ENCODE measurements at regions of chr16 and their contacts with region 1.

Region 1: GRCh38 chr16:17571499-17572093 is 100.8 kb upstream of the XYLT1 start:
- DNase-seq: no peak
- ATAC-seq: no peak
- H3K4me3 Mint-ChIP-seq: no peak overlapping the region
- H3K27ac Mint-ChIP-seq: no peak overlapping the region
- H3K4me1 Mint-ChIP-seq: no peaks in the 10 kb centered on the region
- H3K27me3 Mint-ChIP-seq: peaks cover 2% of the 10 kb centered on the region
- CTCF ChIP-seq: no peak

Region 2: GRCh38 chr16:17556276-17557052 is 15.1 kb before region 1 on chr16:
- CTCF ChIA-PET with region 1: interaction called, 13 read pairs
- POLR2A ChIA-PET with region 1: no interaction called
- intact Hi-C with region 1: no loop called
- DNase-seq: peak; percentile 6
- ATAC-seq: no peak
- H3K4me3 Mint-ChIP-seq: no peak overlapping the region
- H3K27ac Mint-ChIP-seq: no peak overlapping the region
- H3K4me1 Mint-ChIP-seq: no peaks in the 10 kb centered on the region
- H3K27me3 Mint-ChIP-seq: peaks cover 1% of the 10 kb centered on the region
- CTCF ChIP-seq: peak; percentile 64

Region 3: DNA sequence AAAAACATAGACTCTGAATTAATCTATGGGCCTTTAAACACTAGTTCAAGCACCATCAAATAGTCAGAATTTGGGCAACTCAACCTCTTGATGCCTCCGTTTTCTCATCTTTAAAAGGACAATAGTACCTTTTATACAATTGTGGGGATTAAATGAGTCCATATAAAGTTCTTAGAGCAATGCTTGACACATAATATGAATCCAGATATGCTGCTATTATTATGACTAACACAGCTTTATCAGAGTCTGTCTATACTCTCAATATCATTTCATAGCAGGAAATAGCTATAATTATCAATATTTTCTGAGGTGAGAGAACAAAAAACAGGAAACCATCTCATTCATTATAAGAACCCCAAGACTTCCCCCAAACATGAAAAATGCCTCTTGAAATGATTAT is 329.7 kb after region 1 on chr16:
- CTCF ChIA-PET with region 1: no interaction called
- POLR2A ChIA-PET with region 1: no interaction called
- intact Hi-C with region 1: no loop called
- DNase-seq: no peak
- ATAC-seq: no peak
- H3K4me3 Mint-ChIP-seq: no peak overlapping the region
- H3K27ac Mint-ChIP-seq: no peak overlapping the region
- H3K4me1 Mint-ChIP-seq: no peaks in the 10 kb centered on the region
- H3K27me3 Mint-ChIP-seq: peaks cover 6% of the 10 kb centered on the region
- CTCF ChIP-seq: no peak

Measured in activated CD8-positive, alpha-beta T cell treated with anti-CD3 and anti-CD28 coated beads for 36 hours (primary cell).